Posterior vena cava (tissue), 2 donors: ENCODE measurements at regions of chr17 and their contacts with region 1.

Region 1: DNA sequence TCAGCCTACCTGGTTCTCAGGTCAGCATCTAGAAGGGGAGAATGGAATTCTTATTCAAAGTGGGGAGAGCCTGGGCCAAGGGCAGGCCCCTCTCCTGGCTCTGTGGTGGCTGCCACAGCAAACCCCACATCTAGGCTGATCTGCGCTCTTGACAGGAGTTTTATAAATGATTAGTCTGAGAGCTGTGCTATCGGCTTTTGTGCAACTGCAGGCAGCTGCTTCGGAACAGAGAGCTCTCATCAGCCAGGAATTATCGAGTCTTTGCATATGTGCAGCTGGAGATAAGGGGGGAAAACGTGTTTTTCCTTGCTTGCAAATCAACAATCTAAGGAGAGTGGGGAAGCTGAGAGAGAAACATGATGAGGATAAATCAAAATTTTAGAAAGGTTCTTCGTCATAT is 91.7 kb downstream of the HS3ST3A1 start:
- DNase-seq: no peak

Region 2: GRCh38 chr17:13540546-13540945 is 30.5 kb after region 1 on chr17:
- intact Hi-C with region 1: loop called in 1 of 2 experiments (anchors 1 kb)
- DNase-seq: no peak